Right cardiac atrium (tissue), 5 donors: ENCODE measurements at regions of chr7 and their contacts with region 1.

Region 1: GRCh38 chr7:129224251-129225205 is at the start of gene AHCYL2:
- DNase-seq: peak; percentile 98 to 100 (median 99)
- ATAC-seq: peak; percentile 100
- H3K4me3 ChIP-seq: peak within 1 kb of the TSS; percentile 78
- H3K27ac ChIP-seq: peak within 1 kb of the TSS; percentile 99
- H3K4me1 ChIP-seq: no peaks in the 10 kb centered on the region
- H3K27me3 ChIP-seq: no peaks in the 10 kb centered on the region
- total RNA-seq, gene AHCYL2: 6.4 to 8.8 (median 7.9) TPM

Region 2: DNA sequence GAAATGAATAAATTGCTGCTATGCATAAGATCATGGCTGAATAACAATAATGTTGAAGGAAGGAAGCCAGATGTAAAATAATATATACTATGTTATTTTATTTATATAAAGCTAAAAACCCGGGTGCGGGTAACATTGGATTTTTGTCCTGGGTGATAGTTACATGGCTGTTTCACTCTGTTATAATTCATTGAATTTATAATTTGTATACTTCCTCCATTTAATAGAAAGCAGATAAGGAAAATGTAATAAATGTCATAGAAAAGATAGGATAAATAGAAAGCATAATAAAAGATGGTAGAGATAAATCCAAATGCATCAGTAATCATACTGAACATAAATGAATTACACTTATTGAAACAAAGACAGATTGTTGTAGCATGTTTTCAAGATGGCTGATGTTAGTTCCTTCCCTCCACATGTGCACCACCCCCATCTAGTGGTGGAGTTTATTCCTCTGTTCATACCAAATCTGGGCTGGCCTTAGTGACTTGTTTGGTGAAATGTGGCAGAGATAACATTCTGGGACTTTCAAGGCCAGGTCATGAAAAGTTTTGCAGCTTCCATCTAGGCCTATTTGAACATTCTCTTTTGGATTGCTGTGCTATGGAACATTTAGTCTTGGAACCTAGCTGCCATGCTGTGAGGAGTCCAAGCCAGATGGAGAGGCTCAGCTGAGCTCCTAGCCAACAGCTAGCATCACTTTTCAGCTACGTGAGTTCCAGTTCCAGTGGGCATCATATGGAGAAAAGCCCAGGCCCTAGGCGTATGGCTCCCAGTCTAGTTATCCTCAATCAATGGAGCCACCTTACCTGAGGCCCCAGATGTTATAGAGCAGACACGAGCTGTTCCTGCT is 47.2 kb after region 1 on chr7:
- intact Hi-C with region 1: loop called in 2 of 4 experiments (anchors 2 to 10 kb)
- DNase-seq: no peak
- ATAC-seq: peak in 1 of 2 donors; percentile 71
- H3K4me3 ChIP-seq: no peak overlapping the region
- H3K27ac ChIP-seq: no peak overlapping the region
- H3K4me1 ChIP-seq: no peaks in the 10 kb centered on the region
- H3K27me3 ChIP-seq: no peaks in the 10 kb centered on the region

Region 3: DNA sequence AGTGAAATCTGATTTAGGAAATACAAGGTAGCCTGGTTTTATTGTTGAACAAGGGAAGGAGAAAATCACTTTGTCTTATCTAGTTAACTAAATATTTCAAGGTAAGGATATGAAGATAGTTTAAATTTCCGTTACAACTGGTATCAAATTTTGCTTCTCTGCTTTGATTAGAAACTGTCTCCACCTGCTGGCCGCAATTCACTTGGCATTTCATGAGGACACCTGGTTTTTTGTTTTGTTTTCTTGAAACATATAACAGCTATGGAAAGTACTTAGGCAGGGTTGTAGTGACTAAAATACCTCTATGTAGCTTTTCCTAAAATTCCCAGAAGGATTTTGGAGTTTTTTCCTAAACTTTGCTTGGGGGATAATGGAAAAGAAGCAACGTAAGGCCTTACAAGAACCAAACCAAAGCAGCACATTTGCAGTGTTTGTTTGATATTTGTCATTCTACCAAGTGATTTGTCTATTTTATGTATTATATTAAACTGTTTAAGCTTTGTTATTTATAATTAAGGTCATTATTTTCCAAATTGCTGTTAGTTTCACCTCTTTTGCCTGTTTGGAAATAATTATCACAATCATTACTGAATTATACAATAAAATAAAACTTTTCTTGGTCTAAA is 73.9 kb after region 1 on chr7:
- intact Hi-C with region 1: loop called (anchors 5 to 10 kb)
- DNase-seq: peak in 2 of 3 donors; percentile 31 to 76
- ATAC-seq: no peak
- H3K4me3 ChIP-seq: no peak overlapping the region
- H3K27ac ChIP-seq: no peak overlapping the region
- H3K4me1 ChIP-seq: no peaks in the 10 kb centered on the region
- H3K27me3 ChIP-seq: no peaks in the 10 kb centered on the region

Region 4: DNA sequence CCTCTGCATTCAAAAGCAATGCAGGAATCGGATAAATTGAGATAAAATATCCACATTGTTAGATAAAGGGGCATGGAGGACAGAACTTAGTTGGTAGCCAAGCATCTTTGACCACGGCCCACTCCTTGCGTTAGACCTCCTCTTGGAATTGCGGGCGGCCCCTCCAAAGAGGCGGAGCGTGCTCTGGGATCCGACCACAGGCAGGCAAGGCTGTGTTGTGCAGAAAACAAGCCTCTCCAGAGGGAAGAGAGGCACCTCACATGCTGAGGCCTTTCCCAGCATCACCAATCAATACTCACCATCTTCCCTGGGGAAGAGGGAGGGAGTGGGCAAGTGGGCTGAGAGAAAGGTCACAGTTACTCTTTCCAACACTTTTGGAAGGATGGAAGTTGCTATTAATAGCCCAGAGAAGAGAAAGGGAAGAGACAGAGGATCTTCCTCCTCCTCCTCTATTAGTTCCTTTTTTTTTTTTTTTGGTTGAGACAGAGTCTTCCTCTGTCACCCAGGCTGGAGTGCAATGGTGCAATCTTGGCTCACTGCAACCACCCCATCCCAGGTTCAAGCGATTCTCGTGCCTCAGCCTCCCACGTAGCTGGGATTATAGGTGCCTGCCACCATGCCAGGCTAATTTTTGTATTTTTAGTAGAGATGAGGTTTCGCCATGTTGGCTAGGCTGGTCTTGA is 337.3 kb after region 1 on chr7:
- intact Hi-C with region 1: no loop called
- DNase-seq: no peak
- ATAC-seq: no peak
- H3K4me3 ChIP-seq: no peak overlapping the region
- H3K27ac ChIP-seq: no peak overlapping the region
- H3K4me1 ChIP-seq: no peaks in the 10 kb centered on the region
- H3K27me3 ChIP-seq: no peaks in the 10 kb centered on the region